Esophagus squamous epithelium (tissue), 5 donors: ENCODE measurements at regions of chr1 and their contacts with region 1.

Region 1: GRCh38 chr1:31959521-31960340 is 21.6 kb upstream of the PTP4A2 start:
- DNase-seq: no peak
- H3K4me3 ChIP-seq: no peak overlapping the region
- H3K27ac ChIP-seq: no peak overlapping the region
- H3K4me1 ChIP-seq: peaks cover 16 to 52% (median 29%) of the 10 kb centered on the region in 3 donors
- H3K27me3 ChIP-seq: no peaks in the 10 kb centered on the region
- CTCF ChIP-seq: no peak
- POLR2A ChIP-seq: no peak

Region 2: DNA sequence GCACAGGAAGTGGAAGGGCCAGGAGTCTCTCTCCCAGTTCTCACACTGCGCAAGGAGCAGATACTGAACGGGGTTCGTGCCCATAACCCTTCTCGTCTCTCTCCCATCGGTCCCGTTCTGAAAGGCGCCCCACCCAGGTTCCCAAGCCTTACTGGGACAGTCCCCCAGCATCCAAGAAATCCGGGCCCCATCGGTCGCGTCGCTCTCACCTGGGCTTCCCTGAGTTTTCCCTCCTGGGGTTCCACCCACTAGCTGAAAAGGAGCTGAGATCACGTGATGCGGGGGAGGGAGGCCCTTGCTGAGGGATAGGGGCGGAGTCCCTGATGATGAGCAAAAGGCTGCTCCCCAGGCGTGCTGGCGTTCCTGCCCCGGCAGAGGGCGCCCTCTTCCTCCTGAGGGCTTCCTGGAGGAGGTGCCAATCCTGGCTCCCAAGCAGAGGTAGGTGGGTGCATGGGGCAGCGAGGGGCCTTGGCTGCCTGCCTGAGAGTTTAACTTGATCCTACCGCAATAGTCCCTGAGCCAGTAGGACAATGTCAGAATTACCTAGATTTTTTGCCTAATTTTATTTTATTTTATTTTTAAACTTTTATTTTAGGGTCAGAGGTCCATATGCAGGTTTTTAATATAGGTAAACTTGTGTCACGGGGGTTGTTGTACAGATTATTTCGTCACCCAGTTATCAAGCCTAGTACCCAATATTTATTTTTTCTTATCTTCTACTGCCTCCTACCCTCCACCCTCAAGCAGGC is 143.8 kb before region 1 on chr1 and contains the start of gene SPOCD1:
- intact Hi-C with region 1: loop called (anchors 10 kb)
- DNase-seq: peak; percentile 23
- H3K4me3 ChIP-seq: peak within 1 kb of the TSS in 1 of 4 donors; percentile 26
- H3K27ac ChIP-seq: no peak within 1 kb of the TSS
- H3K4me1 ChIP-seq: peaks cover 0 to 16% (median 3%) of the 10 kb centered on the region in 3 donors
- H3K27me3 ChIP-seq: no peaks in the 10 kb centered on the region
- CTCF ChIP-seq: peak; percentile 15 to 80 (median 68)
- POLR2A ChIP-seq: no peak
- total RNA-seq, gene SPOCD1: 0.18 to 0.40 (median 0.38) TPM in 3 of 4 donors, not detected in the other

Region 3: GRCh38 chr1:31904339-31905092 is 55.2 kb before region 1 on chr1:
- intact Hi-C with region 1: no loop called
- DNase-seq: no peak
- H3K4me3 ChIP-seq: no peak overlapping the region
- H3K27ac ChIP-seq: peak overlapping the region in 1 of 4 donors; percentile 21
- H3K4me1 ChIP-seq: no peaks in the 10 kb centered on the region
- H3K27me3 ChIP-seq: no peaks in the 10 kb centered on the region
- CTCF ChIP-seq: no peak
- POLR2A ChIP-seq: no peak

Region 4: GRCh38 chr1:31915438-31915837 is 44.3 kb before region 1 on chr1:
- intact Hi-C with region 1: no loop called
- DNase-seq: no peak
- H3K4me3 ChIP-seq: no peak overlapping the region
- H3K27ac ChIP-seq: no peak overlapping the region
- H3K4me1 ChIP-seq: peaks cover 7 to 24% (median 9%) of the 10 kb centered on the region in 3 donors
- H3K27me3 ChIP-seq: no peaks in the 10 kb centered on the region
- CTCF ChIP-seq: no peak
- POLR2A ChIP-seq: no peak

Region 5: DNA sequence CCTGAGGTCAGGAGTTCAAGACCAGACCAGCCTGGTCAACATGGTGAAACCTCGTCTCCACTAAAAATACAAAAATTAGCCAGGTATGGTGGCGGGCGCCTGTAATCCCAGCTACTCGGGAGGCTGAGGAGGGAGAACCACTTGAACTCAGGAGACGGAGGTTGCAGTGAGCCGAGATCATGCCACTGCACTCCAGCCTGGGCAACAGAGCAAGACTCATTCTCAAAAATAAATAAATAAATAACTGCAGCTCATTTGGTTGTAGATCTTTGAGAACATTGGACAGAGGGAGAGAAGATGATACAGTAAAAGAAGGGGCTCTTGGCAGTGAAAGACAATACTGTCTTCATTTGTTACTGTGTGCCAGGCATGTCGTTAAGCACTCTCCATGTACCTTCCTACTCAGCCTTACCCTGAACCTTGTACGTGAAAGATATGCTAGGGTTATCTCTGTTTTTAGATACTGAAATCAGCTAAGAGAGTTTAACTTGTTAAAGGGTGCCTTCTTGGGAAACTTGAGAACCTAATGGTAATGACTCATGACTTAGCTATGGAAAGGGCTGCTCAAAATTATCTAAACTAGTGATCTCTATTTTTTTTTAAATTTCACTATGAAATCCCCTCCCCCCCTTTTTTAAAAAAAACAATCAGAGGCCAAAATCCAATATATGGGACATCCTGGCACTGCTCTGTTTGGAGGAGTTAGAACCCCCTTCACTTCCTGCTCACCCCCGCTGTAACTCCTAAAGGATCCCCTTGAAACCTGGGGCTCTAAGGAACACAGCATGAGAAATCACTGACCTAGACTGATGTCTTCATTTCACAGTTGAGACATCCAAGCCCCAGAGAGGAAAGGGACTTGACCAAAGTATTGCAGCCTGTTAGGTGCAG is 141.3 kb after region 1 on chr1:
- intact Hi-C with region 1: no loop called
- DNase-seq: no peak
- H3K4me3 ChIP-seq: no peak overlapping the region
- H3K27ac ChIP-seq: no peak overlapping the region
- H3K4me1 ChIP-seq: no peaks in the 10 kb centered on the region
- H3K27me3 ChIP-seq: no peaks in the 10 kb centered on the region
- CTCF ChIP-seq: no peak
- POLR2A ChIP-seq: no peak